Heart right ventricle (tissue), 16 donors: ENCODE measurements at regions of chr5 and their contacts with region 1.

Region 1: DNA sequence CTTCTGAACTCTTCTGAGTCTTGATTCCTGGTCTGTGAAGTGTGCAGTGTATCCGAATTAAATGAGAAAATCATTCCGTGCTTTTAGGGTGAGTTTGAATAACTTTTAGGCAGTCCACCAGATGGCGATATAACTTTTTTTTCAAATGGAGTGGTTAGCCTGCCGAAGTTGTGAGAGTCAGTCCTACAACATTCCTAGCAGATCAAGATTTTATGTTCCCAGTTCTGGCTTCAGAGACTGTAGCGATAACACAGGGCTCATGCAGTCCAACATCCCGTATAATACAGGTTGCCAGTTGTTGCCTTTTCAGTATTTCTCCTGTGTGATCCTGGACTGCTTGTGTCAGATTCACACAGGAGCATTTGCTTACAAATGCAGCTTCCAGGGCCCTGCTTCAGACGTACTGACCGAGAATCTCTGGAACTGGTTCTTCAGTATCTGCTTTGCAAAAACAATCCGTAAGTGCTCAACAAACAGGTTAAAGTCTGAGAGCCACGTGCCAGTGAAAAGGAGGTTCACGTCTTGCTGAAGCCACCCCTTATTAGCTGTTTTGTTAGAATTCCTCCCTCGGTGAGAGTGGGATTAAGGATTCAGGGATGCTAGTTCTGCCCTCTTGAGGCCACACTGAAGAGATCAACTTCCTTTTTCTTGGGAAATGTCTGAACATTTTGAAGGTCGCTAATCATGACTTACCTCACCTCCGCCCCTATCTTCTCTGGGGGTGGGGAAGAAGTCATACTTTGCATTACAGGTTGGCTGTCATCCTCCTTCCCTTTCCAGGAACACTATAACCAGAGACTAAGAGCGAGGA is 22.8 kb downstream of the SMIM3 start:
- DNase-seq: peak in 1 of 2 donors; percentile 51
- ATAC-seq: peak; percentile 75 to 93 (median 90)
- H3K4me3 ChIP-seq: peak overlapping the region in 9 of 10 donors; percentile 18 to 51 (median 43)
- H3K27ac ChIP-seq: peak overlapping the region in 9 of 10 donors; percentile 10 to 63 (median 41)
- H3K4me1 ChIP-seq: peaks cover 0 to 13% (median 4%) of the 10 kb centered on the region in 9 donors
- H3K27me3 ChIP-seq: no peaks in the 10 kb centered on the region
- CTCF ChIP-seq: peak; percentile 27 to 67 (median 53)

Region 2: GRCh38 chr5:150778517-150779396 is 22.6 kb before region 1 on chr5 and contains the start of gene SMIM3:
- intact Hi-C with region 1: loop called in 1 of 10 experiments (anchors 2 kb)
- DNase-seq: peak; percentile 88 to 90
- ATAC-seq: peak; percentile 76 to 92 (median 90)
- H3K4me3 ChIP-seq: peak within 1 kb of the TSS; percentile 61 to 92 (median 78)
- H3K27ac ChIP-seq: peak within 1 kb of the TSS; percentile 79 to 96 (median 92)
- H3K4me1 ChIP-seq: peaks cover 11 to 69% (median 49%) of the 10 kb centered on the region in 9 donors
- H3K27me3 ChIP-seq: no peaks in the 10 kb centered on the region
- CTCF ChIP-seq: peak in 7 of 9 donors; percentile 23 to 65 (median 57)
- total RNA-seq, gene SMIM3: 7.1 to 24.2 (median 10.9) TPM

Region 3: DNA sequence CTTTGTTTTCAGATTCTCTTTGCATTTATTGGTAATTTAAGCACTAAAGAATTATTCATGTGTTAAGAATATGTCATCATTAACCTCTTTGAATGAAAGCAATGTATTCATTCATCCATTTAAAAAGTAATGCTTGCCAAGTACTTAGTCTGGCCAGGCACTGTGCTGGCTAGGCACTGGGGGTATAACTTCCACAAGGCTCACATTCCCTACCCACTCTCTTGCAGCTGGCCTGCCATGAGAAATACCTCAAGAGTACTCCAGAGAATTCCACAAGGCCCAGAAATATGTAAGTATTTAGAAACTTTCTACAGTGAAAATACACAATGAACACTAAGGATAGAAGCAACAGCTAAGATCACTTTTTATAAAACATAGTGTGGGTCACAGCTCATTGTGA is 78.0 kb after region 1 on chr5:
- intact Hi-C with region 1: no loop called
- DNase-seq: no peak
- ATAC-seq: no peak
- H3K4me3 ChIP-seq: no peak overlapping the region
- H3K27ac ChIP-seq: no peak overlapping the region
- H3K4me1 ChIP-seq: no peaks in the 10 kb centered on the region
- H3K27me3 ChIP-seq: no peaks in the 10 kb centered on the region
- CTCF ChIP-seq: no peak

Region 4: GRCh38 chr5:151134238-151134637 is 332.9 kb after region 1 on chr5:
- intact Hi-C with region 1: no loop called
- DNase-seq: no peak
- ATAC-seq: no peak
- H3K4me3 ChIP-seq: no peak overlapping the region
- H3K27ac ChIP-seq: no peak overlapping the region
- H3K4me1 ChIP-seq: peaks cover 0 to 26% (median 0%) of the 10 kb centered on the region in 9 donors
- H3K27me3 ChIP-seq: no peaks in the 10 kb centered on the region
- CTCF ChIP-seq: no peak